ENCODE measurements at regions of chr15 and their contacts with region 1.

Region 1: GRCh38 chr15:79904271-79904670 is 7.5 kb upstream of the MTHFS start:
- DNase-seq: no peak
- ATAC-seq: no peak
- H3K4me3 ChIP-seq: no peak overlapping the region
- H3K27ac ChIP-seq: no peak overlapping the region
- H3K4me1 ChIP-seq: no peaks in the 10 kb centered on the region
- H3K27me3 ChIP-seq: no peaks in the 10 kb centered on the region
- CTCF ChIP-seq: no peak

Region 2: GRCh38 chr15:79682285-79682684 is 222.0 kb before region 1 on chr15:
- CTCF ChIA-PET with region 1: no interaction called
- POLR2A ChIA-PET with region 1: no interaction called
- in situ Hi-C with region 1: no loop called
- intact Hi-C with region 1: no loop called
- DNase-seq: no peak
- ATAC-seq: no peak
- H3K4me3 ChIP-seq: no peak overlapping the region
- H3K27ac ChIP-seq: no peak overlapping the region
- H3K4me1 ChIP-seq: no peaks in the 10 kb centered on the region
- H3K27me3 ChIP-seq: 0 out of 2 replicates have a peak, but pooled peaks cover 2% of the 10 kb centered on the region
- CTCF ChIP-seq: no peak

Region 3: DNA sequence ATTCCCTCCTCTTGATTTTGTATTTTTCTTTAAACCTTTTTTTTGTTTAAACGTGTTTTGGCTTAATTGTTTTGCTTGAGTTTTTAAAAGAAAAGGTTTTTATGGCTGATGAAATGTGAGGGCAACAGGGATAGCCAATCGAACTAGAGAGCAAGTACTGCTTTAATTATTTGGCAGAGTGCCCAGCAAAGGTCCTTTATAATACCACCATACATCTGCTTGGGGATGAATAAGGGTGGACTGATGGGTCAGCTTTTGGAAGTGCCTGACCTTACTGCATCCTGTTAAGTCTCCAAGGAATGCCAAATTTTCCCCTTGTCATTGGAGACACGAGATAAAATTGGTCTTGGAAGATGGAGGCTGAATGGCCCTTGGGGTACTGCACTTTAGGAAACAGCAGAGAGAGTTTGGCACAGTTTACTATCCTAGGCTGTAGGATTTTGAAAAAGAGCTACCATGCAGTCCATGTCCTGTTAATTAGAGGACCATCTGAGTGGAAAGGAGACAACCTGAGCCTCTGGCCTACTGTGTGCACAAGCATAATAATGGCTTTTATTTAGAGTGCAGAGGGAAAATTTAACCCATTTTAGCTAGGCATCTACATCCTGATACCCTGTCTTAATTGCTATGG is 12.3 kb after region 1 on chr15:
- CTCF ChIA-PET with region 1: no interaction called
- POLR2A ChIA-PET with region 1: interaction called, 10 read pairs
- in situ Hi-C with region 1: no loop called
- intact Hi-C with region 1: no loop called
- DNase-seq: no peak
- ATAC-seq: no peak
- H3K4me3 ChIP-seq: no peak overlapping the region
- H3K27ac ChIP-seq: no peak overlapping the region
- H3K4me1 ChIP-seq: no peaks in the 10 kb centered on the region
- H3K27me3 ChIP-seq: no peaks in the 10 kb centered on the region
- CTCF ChIP-seq: no peak

Region 4: DNA sequence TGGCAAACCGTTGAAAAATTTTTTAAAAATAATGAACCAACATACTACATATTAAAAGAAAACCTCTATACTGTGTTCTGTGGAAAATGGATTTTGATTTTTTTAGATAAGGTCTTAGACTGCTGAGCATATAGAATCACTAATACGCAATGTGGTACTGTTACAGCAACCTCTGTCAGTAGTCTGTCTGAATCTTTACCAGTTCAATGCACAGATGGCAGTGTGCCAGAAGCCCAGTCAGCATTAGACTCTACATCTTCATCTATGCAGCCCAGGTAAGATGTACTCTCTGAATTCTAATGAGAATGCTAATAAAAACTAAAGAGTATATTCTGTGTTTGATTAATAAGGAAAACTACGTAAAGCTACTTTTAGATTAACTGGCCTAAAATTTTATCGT is 217.3 kb after region 1 on chr15:
- CTCF ChIA-PET with region 1: no interaction called
- POLR2A ChIA-PET with region 1: no interaction called
- in situ Hi-C with region 1: no loop called
- intact Hi-C with region 1: no loop called
- DNase-seq: no peak
- ATAC-seq: no peak
- H3K4me3 ChIP-seq: no peak overlapping the region
- H3K27ac ChIP-seq: no peak overlapping the region
- H3K4me1 ChIP-seq: no peaks in the 10 kb centered on the region
- H3K27me3 ChIP-seq: no peaks in the 10 kb centered on the region
- CTCF ChIP-seq: no peak